CD4-positive, alpha-beta T cell (primary cell): ENCODE measurements at regions of chr1 and their contacts with region 1.

Region 1: GRCh38 chr1:101282314-101283038 is 45.7 kb downstream of the S1PR1 start:
- DNase-seq: no peak
- ATAC-seq: no peak
- H3K4me3 ChIP-seq: no peak overlapping the region
- H3K4me3 Mint-ChIP-seq: peak overlapping the region; percentile 55
- H3K27ac ChIP-seq: peak overlapping the region; percentile 67 to 80
- H3K27ac Mint-ChIP-seq: peak overlapping the region; percentile 96
- H3K4me1 ChIP-seq: peaks cover 86% of the 10 kb centered on the region
- H3K4me1 Mint-ChIP-seq: peaks cover 95% of the 10 kb centered on the region
- H3K27me3 ChIP-seq: no peaks in the 10 kb centered on the region
- H3K27me3 Mint-ChIP-seq: no peaks in the 10 kb centered on the region
- CTCF ChIP-seq: no peak

Region 2: GRCh38 chr1:101025657-101026504 is 256.6 kb before region 1 on chr1 and contains the start of gene DPH5:
- CTCF ChIA-PET with region 1: no interaction called
- POLR2A ChIA-PET with region 1: interaction called, 3 read pairs
- intact Hi-C with region 1: loop called (anchors 5 kb)
- DNase-seq: peak; percentile 77 to 91 (median 84)
- ATAC-seq: peak; percentile 94
- H3K4me3 ChIP-seq: peak within 1 kb of the TSS; percentile 77
- H3K4me3 Mint-ChIP-seq: peak within 1 kb of the TSS; percentile 97
- H3K27ac ChIP-seq: peak within 1 kb of the TSS; percentile 63 to 75
- H3K27ac Mint-ChIP-seq: peak within 1 kb of the TSS; percentile 98
- H3K4me1 ChIP-seq: peaks cover 19% of the 10 kb centered on the region
- H3K4me1 Mint-ChIP-seq: peaks cover 91% of the 10 kb centered on the region
- H3K27me3 ChIP-seq: no peaks in the 10 kb centered on the region
- H3K27me3 Mint-ChIP-seq: no peaks in the 10 kb centered on the region
- CTCF ChIP-seq: no peak
- total RNA-seq, gene DPH5: 31.3 to 35.4 TPM

Region 3: GRCh38 chr1:101247404-101248287 is 34.8 kb before region 1 on chr1:
- CTCF ChIA-PET with region 1: interaction called, 11 read pairs
- POLR2A ChIA-PET with region 1: interaction called, 37 read pairs
- intact Hi-C with region 1: no loop called
- DNase-seq: no peak
- ATAC-seq: no peak
- H3K4me3 ChIP-seq: no peak overlapping the region
- H3K4me3 Mint-ChIP-seq: peak overlapping the region; percentile 8
- H3K27ac ChIP-seq: no peak overlapping the region
- H3K27ac Mint-ChIP-seq: peak overlapping the region; percentile 40
- H3K4me1 ChIP-seq: peaks cover 44% of the 10 kb centered on the region
- H3K4me1 Mint-ChIP-seq: peaks cover 79% of the 10 kb centered on the region
- H3K27me3 ChIP-seq: no peaks in the 10 kb centered on the region
- H3K27me3 Mint-ChIP-seq: no peaks in the 10 kb centered on the region
- CTCF ChIP-seq: no peak

Region 4: GRCh38 chr1:101257500-101258325 is 24.8 kb before region 1 on chr1:
- CTCF ChIA-PET with region 1: interaction called, 13 read pairs
- POLR2A ChIA-PET with region 1: interaction called, 13 read pairs
- intact Hi-C with region 1: no loop called
- DNase-seq: peak in 5 of 14 experiments; percentile 24 to 81 (median 64)
- ATAC-seq: peak; percentile 72
- H3K4me3 ChIP-seq: no peak overlapping the region
- H3K4me3 Mint-ChIP-seq: peak overlapping the region; percentile 56
- H3K27ac ChIP-seq: peak overlapping the region; percentile 47 to 54
- H3K27ac Mint-ChIP-seq: peak overlapping the region; percentile 47
- H3K4me1 ChIP-seq: peaks cover 46% of the 10 kb centered on the region
- H3K4me1 Mint-ChIP-seq: peaks cover 65% of the 10 kb centered on the region
- H3K27me3 ChIP-seq: no peaks in the 10 kb centered on the region
- H3K27me3 Mint-ChIP-seq: no peaks in the 10 kb centered on the region
- CTCF ChIP-seq: no peak

Region 5: DNA sequence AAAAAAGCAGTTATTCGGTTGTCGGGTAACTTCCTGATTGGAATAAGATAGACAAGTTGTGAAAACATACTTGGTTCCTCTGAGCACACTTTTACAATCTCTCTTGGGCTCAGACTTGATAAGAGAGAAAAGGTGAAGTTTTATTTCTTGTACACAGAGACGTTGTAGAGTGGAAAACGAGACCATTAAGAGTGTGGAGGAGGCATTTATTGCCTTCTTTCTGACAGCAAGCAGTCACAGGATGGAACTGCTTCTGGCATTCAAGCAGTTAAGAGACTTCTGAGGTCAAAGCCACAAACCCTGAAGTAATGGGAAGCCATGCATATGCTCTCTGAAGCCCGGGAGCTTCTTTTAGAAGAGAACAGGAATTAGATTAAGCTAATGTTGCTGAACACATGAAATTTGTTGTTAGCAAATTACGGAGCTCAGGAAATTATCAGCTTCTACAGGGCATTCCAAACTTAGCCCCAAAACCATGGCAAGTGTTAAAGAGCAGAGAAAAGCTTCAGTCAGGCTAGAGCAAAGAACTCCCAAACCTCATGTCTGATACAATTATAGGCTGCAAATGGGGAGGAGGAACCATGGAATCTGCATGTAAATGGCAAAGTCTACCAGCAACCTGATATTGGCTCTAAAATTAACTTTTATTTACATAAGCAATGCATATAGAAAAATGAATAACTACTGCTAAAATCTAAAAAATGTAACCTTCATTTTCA is 19.7 kb before region 1 on chr1:
- CTCF ChIA-PET with region 1: interaction called, 13 read pairs
- POLR2A ChIA-PET with region 1: interaction called, 31 read pairs
- intact Hi-C with region 1: loop called in 1 of 2 experiments (anchors 2 kb)
- DNase-seq: peak in 5 of 14 experiments; percentile 12 to 87 (median 61)
- ATAC-seq: peak; percentile 55
- H3K4me3 ChIP-seq: peak overlapping the region; percentile 25
- H3K4me3 Mint-ChIP-seq: peak overlapping the region; percentile 83
- H3K27ac ChIP-seq: peak overlapping the region in 1 of 2 donors; percentile 12
- H3K27ac Mint-ChIP-seq: peak overlapping the region; percentile 88
- H3K4me1 ChIP-seq: peaks cover 80% of the 10 kb centered on the region
- H3K4me1 Mint-ChIP-seq: peaks cover 85% of the 10 kb centered on the region
- H3K27me3 ChIP-seq: no peaks in the 10 kb centered on the region
- H3K27me3 Mint-ChIP-seq: no peaks in the 10 kb centered on the region
- CTCF ChIP-seq: no peak